Heart right ventricle (tissue), 16 donors: ENCODE measurements at regions of chr17 and their contacts with region 1.

Region 1: GRCh38 chr17:78250891-78251794 is 19.7 kb downstream of the TMEM235 start:
- DNase-seq: peak; percentile 82 to 87
- ATAC-seq: peak; percentile 63 to 82 (median 78)
- H3K4me3 ChIP-seq: peak overlapping the region in 1 of 10 donors; percentile 25
- H3K27ac ChIP-seq: peak overlapping the region in 1 of 10 donors; percentile 63
- H3K4me1 ChIP-seq: peaks cover 0 to 47% (median 21%) of the 10 kb centered on the region in 9 donors
- H3K27me3 ChIP-seq: no peaks in the 10 kb centered on the region
- CTCF ChIP-seq: peak; percentile 99 to 100 (median 100)

Region 2: GRCh38 chr17:77821097-77821496 is 430.0 kb before region 1 on chr17:
- intact Hi-C with region 1: no loop called
- DNase-seq: peak; percentile 33 to 37
- ATAC-seq: peak in 7 of 8 donors; percentile 41 to 79 (median 66)
- H3K4me3 ChIP-seq: no peak overlapping the region
- H3K27ac ChIP-seq: peak overlapping the region in 3 of 10 donors; percentile 27 to 35 (median 30)
- H3K4me1 ChIP-seq: peaks cover 4 to 39% (median 11%) of the 10 kb centered on the region in 9 donors
- H3K27me3 ChIP-seq: no peaks in the 10 kb centered on the region
- CTCF ChIP-seq: peak in 7 of 9 donors; percentile 19 to 44 (median 22)

Region 3: DNA sequence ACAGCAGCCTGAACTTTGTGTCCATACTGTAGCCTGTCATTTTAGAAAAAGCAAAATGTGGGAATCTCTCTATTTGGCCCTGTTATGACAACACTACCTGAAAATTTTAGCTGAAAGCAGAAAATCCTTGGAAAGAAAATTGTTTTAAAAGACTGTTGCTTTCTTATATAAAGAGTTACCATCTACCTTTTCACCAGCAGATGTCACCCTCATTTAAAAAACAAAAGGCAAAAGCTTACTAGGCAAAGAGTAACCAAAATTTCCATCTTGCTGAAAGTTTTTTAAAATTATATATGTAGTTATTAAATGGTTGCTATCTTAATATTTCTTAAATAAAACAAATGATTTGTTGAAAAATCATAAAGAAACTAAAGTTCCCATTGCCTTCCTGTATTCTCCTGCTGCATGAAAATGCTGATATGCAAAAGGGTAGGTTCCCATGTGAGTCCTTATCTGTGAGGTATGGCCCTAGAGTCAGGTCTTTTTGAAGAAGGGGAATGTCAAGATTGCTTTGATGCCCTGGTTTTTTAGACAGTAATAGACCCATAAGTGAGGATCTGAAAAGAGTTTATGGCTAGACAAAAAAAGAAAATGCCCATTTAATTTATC is 231.7 kb before region 1 on chr17:
- intact Hi-C with region 1: loop called in 1 of 10 experiments (anchors 5 kb)
- DNase-seq: no peak
- ATAC-seq: peak in 1 of 8 donors; percentile 39
- H3K4me3 ChIP-seq: no peak overlapping the region
- H3K27ac ChIP-seq: peak overlapping the region in 3 of 10 donors; percentile 2 to 32 (median 3)
- H3K4me1 ChIP-seq: peaks cover 0 to 28% (median 13%) of the 10 kb centered on the region in 9 donors
- H3K27me3 ChIP-seq: no peaks in the 10 kb centered on the region
- CTCF ChIP-seq: peak in 8 of 9 donors; percentile 34 to 73 (median 66)

Region 4: GRCh38 chr17:78112518-78113226 is 138.5 kb before region 1 on chr17:
- intact Hi-C with region 1: loop called in 9 of 10 experiments (anchors 5 to 10 kb)
- DNase-seq: peak; percentile 77 to 85
- ATAC-seq: peak; percentile 66 to 78 (median 70)
- H3K4me3 ChIP-seq: no peak overlapping the region
- H3K27ac ChIP-seq: peak overlapping the region in 8 of 10 donors; percentile 11 to 53 (median 29)
- H3K4me1 ChIP-seq: peaks cover 19 to 76% (median 31%) of the 10 kb centered on the region in 9 donors
- H3K27me3 ChIP-seq: no peaks in the 10 kb centered on the region
- CTCF ChIP-seq: peak; percentile 99 to 100 (median 100)

Region 5: DNA sequence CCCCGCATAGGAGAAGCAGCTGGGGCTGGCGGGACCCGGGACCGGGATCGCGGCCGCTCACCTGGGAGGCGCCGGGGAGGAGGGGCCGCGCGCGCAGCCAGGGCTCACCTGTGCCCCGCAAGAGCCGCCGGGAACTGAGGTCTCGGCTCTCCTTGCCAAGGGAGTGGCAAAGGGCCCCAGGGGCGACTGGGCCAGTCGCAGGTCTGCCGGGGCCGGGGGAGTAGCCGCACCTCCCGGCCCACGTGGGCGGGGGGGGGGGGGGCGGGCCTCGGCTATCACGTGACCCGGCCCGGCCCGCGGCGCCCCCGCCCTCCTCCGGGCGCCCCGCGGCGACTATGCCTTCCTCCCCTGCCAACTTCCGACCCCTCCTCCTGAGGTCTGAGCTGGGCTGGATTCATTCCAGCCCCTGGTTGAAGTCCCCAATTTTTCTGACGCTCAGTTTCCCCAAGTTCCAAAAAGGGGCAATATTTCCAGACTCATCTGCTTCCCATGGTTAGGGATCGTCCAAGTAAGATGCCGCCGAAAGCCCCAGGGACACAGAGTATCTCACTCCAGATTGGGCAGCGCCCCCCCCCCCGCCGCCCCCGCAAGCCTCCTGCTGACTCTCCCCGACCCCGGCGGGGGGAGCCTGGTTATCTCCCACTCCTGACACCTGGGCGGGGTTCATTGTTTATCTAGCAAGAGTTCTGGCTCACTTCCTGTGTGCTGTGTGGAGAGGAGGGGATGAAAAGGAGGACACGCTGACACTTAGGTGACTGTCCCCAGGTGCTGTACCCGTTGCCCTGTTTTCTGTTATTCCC is 122.4 kb before region 1 on chr17 and contains the start of gene TMC6:
- intact Hi-C with region 1: loop called in 1 of 10 experiments (anchors 5 kb)
- DNase-seq: peak in 1 of 2 donors; percentile 64
- ATAC-seq: peak; percentile 2 to 54 (median 24)
- H3K4me3 ChIP-seq: peak within 1 kb of the TSS; percentile 57 to 97 (median 88)
- H3K27ac ChIP-seq: peak within 1 kb of the TSS; percentile 89 to 98 (median 96)
- H3K4me1 ChIP-seq: peaks cover 31 to 98% (median 76%) of the 10 kb centered on the region in 9 donors
- H3K27me3 ChIP-seq: peaks cover 0 to 3% (median 0%) of the 10 kb centered on the region in 7 donors
- CTCF ChIP-seq: no peak
- total RNA-seq, gene TMC6: 42.3 to 109 (median 69.1) TPM

Region 6: GRCh38 chr17:78186692-78187595 is 64.2 kb before region 1 on chr17 and contains the starts of genes AFMID and TK1:
- intact Hi-C with region 1: loop called in 2 of 10 experiments (anchors 5 kb)
- DNase-seq: peak; percentile 96 to 98
- ATAC-seq: peak; percentile 97 to 99 (median 98)
- H3K4me3 ChIP-seq: peak within 1 kb of the TSS; percentile 29 to 62 (median 53)
- H3K27ac ChIP-seq: peak within 1 kb of the TSS in 8 of 10 donors; percentile 7 to 84 (median 61)
- H3K4me1 ChIP-seq: peaks cover 3 to 36% (median 18%) of the 10 kb centered on the region in 9 donors
- H3K27me3 ChIP-seq: no peaks in the 10 kb centered on the region
- CTCF ChIP-seq: peak; percentile 61 to 91 (median 86)
- total RNA-seq, gene AFMID: 23.7 to 42.4 (median 28.7) TPM
- total RNA-seq, gene TK1: 0.33 to 12.7 (median 0.91) TPM

Region 7: GRCh38 chr17:78223061-78223460 is 28.1 kb before region 1 on chr17:
- intact Hi-C with region 1: loop called in 1 of 10 experiments (anchors 2 kb)
- DNase-seq: no peak
- ATAC-seq: peak in 5 of 8 donors; percentile 20 to 59 (median 45)
- H3K4me3 ChIP-seq: no peak overlapping the region
- H3K27ac ChIP-seq: peak overlapping the region in 6 of 10 donors; percentile 41 to 64 (median 50)
- H3K4me1 ChIP-seq: peaks cover 0 to 25% (median 9%) of the 10 kb centered on the region in 9 donors
- H3K27me3 ChIP-seq: peaks cover 0 to 3% (median 0%) of the 10 kb centered on the region in 7 donors
- CTCF ChIP-seq: no peak